A673 (cell line): ENCODE measurements at regions of chr17 and their contacts with region 1.

Region 1: DNA sequence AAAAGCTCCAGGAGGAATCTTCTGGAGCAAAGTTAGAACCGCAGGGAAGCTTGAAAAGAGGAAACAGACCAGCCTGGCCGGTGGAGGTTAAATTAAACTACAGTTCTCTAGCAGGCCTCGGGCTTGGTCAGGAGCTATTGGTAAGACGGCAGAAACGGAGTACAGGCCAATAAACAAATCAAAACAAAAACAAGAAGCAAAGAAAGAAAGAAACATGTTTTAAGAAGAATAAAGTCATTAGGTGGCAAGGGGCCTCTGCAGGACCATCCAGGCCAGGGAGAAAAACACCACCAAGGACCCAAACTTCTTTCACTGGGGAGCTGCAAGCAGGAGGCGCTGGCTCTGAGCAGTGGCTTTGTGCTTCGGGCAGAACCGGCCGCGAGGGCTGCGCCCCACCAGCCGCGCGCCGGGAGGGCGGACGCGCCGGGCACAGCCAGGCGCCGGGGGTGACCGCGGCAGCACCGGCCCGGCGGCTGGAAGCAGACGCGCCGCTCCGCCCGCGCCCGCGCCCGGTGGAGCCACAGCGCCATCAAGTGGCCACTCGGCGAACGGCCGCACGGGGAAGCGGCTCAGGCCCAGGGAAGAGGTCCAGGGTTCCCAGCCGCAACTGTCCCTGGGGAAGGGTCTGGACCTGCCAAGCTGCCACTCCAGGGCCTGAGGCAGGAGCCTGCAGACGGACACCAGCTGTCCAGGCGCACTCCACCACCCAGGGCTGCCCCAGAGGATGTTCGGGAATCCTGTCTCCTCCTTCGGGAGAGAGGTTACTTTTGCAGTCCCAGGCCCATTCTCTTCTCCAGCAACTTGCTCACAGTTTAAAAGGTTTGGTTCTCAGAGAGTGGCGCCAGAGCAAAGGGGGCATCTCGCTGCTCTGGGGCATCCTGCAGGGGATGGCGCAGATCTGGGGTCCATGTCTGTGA is 419.4 kb downstream of the SOX9 start:
- DNase-seq: peak; percentile 75
- H3K4me3 ChIP-seq: peak overlapping the region; percentile 8
- H3K27ac ChIP-seq: no peak overlapping the region
- H3K4me1 ChIP-seq: peaks cover 8% of the 10 kb centered on the region
- H3K27me3 ChIP-seq: no peaks in the 10 kb centered on the region
- CTCF ChIP-seq: peak; percentile 73

Region 2: GRCh38 chr17:70636517-70637133 is 1903.6 kb before region 1 on chr17:
- CTCF ChIA-PET with region 1: no interaction called
- POLR2A ChIA-PET with region 1: no interaction called
- intact Hi-C with region 1: loop called (anchors 5 kb)
- DNase-seq: peak; percentile 58
- H3K4me3 ChIP-seq: no peak overlapping the region
- H3K27ac ChIP-seq: no peak overlapping the region
- H3K4me1 ChIP-seq: no peaks in the 10 kb centered on the region
- H3K27me3 ChIP-seq: no peaks in the 10 kb centered on the region
- CTCF ChIP-seq: peak; percentile 72

Region 3: DNA sequence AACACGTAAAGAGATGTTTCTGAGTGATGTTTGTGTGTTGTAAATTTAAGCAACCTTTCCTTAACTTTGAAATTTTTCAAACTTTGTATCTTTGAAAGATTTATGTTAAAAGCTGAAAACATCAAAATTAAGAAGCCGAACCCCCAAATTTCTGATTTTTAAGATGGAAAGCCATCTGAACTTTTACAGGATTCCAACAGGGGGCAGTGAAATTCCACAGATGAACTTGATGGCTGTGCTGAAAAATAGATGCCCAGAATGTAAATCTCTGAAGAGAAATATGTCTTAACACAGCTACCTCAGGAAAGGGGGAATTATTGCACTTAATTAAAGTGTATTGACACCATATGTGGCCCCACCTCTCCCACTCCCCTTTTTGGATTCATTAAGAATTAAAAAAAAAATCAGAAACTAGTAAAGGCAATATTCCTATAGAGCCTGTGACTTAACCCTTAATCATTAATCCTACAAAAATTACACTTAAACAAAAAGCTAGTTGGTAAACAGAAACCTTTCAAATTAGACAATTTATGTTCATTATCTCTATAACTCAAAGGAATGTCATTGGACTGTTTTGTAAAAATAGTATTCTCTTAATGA is 1773.0 kb before region 1 on chr17:
- CTCF ChIA-PET with region 1: no interaction called
- POLR2A ChIA-PET with region 1: no interaction called
- intact Hi-C with region 1: loop called (anchors 1 kb)
- DNase-seq: peak; percentile 34
- H3K4me3 ChIP-seq: no peak overlapping the region
- H3K27ac ChIP-seq: no peak overlapping the region
- H3K4me1 ChIP-seq: no peaks in the 10 kb centered on the region
- H3K27me3 ChIP-seq: no peaks in the 10 kb centered on the region
- CTCF ChIP-seq: peak; percentile 72

Region 4: GRCh38 chr17:71472809-71473789 is 1067.1 kb before region 1 on chr17:
- CTCF ChIA-PET with region 1: no interaction called
- POLR2A ChIA-PET with region 1: no interaction called
- intact Hi-C with region 1: loop called (anchors 1 kb)
- DNase-seq: peak; percentile 73
- H3K4me3 ChIP-seq: no peak overlapping the region
- H3K27ac ChIP-seq: no peak overlapping the region
- H3K4me1 ChIP-seq: no peaks in the 10 kb centered on the region
- H3K27me3 ChIP-seq: no peaks in the 10 kb centered on the region
- CTCF ChIP-seq: peak; percentile 73

Region 5: DNA sequence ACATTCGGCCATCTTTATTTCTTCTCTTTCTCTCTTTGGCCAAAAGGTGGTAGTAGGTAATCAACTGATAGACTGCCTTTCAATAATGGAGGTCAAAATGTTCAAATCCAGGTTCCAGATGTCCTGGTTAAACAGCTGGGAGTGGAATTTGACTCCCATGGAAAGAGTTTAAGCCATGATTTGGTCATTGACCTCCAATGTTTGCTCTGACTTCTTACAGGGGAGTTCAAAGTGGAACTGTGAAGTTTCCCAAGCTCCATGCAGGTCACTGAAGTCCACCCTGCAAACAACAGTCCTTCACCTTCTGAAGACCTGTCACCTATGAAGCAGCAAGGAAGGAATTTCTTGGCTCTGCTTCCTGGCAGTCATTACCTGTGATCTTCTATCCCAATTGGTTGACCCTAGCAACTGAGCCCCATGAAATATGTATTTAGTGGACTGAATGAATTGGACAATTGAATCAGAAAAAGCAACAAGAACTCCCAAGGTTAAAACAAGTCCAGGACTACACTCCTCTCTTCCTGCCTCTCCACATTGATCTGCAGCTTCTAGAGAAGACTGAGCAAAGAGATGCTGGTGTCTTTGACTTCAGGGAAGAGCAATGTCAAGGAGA is 447.4 kb before region 1 on chr17:
- CTCF ChIA-PET with region 1: interaction called, 14 read pairs
- POLR2A ChIA-PET with region 1: no interaction called
- intact Hi-C with region 1: no loop called
- DNase-seq: no peak
- H3K4me3 ChIP-seq: no peak overlapping the region
- H3K27ac ChIP-seq: no peak overlapping the region
- H3K4me1 ChIP-seq: no peaks in the 10 kb centered on the region
- H3K27me3 ChIP-seq: no peaks in the 10 kb centered on the region
- CTCF ChIP-seq: no peak

Region 6: DNA sequence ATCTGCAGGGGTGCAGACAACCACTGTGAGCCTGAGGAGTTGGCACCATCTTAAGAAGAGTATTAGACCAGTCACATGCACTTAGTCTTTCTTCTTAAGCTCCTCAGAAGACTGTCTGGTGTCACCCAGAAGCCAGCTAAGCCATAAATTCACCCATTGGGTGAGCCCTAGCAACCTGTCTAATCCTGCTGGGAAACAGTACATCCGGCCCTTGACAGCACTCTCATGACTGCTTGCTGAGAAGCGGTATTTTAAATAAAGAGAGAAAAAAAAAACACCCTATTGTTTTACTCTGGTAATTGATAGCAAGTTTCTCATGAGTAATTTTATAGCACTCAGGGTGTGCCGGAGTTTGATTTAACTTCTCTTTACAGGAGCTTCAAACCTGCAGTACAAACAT is 284.8 kb before region 1 on chr17:
- CTCF ChIA-PET with region 1: interaction called, 17 read pairs
- POLR2A ChIA-PET with region 1: no interaction called
- intact Hi-C with region 1: no loop called
- DNase-seq: peak; percentile 53
- H3K4me3 ChIP-seq: no peak overlapping the region
- H3K27ac ChIP-seq: no peak overlapping the region
- H3K4me1 ChIP-seq: no peaks in the 10 kb centered on the region
- H3K27me3 ChIP-seq: no peaks in the 10 kb centered on the region
- CTCF ChIP-seq: no peak

Region 7: GRCh38 chr17:72373910-72374741 is 166.1 kb before region 1 on chr17:
- CTCF ChIA-PET with region 1: no interaction called
- POLR2A ChIA-PET with region 1: no interaction called
- intact Hi-C with region 1: loop called (anchors 1 kb)
- DNase-seq: peak; percentile 71
- H3K4me3 ChIP-seq: no peak overlapping the region
- H3K27ac ChIP-seq: peak overlapping the region; percentile 48
- H3K4me1 ChIP-seq: peaks cover 62% of the 10 kb centered on the region
- H3K27me3 ChIP-seq: no peaks in the 10 kb centered on the region
- CTCF ChIP-seq: no peak

Region 8: DNA sequence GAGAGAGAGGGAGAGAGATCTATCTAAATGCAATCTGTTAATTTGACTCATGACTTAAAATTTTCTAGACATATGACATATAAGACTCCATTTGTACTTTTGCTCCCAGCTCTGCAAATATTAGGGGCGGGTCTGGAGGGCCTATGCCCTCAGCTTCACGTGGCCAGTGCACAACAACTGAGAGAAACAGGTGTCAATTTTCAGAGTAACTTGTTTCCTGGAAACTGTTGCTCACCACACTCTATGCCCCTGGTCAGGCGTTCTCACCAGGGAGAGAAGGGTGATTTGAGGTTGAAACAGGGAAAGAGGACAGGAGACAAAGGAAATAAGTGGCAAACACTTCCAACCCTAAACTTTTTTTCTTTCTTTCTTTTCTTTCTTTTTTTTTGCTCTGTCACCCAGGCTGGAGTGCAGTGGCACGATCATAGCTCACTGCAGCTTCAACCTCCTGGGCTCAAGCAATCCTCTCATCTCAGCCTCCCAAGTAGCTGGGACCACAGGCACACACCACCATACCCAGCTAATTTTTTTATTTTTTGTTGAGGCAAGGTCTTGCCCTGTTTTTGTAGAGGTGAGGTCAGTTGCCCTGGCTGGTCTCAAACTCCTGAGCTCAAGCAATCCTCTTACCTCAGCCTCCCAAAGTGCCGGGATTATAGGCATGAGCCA is 282.3 kb after region 1 on chr17:
- CTCF ChIA-PET with region 1: no interaction called
- POLR2A ChIA-PET with region 1: no interaction called
- intact Hi-C with region 1: no loop called
- DNase-seq: no peak
- H3K4me3 ChIP-seq: no peak overlapping the region
- H3K27ac ChIP-seq: no peak overlapping the region
- H3K4me1 ChIP-seq: no peaks in the 10 kb centered on the region
- H3K27me3 ChIP-seq: no peaks in the 10 kb centered on the region
- CTCF ChIP-seq: no peak